Common myeloid progenitor, CD34-positive (primary cell): ENCODE measurements at regions of chr10 and their contacts with region 1.

Region 1: DNA sequence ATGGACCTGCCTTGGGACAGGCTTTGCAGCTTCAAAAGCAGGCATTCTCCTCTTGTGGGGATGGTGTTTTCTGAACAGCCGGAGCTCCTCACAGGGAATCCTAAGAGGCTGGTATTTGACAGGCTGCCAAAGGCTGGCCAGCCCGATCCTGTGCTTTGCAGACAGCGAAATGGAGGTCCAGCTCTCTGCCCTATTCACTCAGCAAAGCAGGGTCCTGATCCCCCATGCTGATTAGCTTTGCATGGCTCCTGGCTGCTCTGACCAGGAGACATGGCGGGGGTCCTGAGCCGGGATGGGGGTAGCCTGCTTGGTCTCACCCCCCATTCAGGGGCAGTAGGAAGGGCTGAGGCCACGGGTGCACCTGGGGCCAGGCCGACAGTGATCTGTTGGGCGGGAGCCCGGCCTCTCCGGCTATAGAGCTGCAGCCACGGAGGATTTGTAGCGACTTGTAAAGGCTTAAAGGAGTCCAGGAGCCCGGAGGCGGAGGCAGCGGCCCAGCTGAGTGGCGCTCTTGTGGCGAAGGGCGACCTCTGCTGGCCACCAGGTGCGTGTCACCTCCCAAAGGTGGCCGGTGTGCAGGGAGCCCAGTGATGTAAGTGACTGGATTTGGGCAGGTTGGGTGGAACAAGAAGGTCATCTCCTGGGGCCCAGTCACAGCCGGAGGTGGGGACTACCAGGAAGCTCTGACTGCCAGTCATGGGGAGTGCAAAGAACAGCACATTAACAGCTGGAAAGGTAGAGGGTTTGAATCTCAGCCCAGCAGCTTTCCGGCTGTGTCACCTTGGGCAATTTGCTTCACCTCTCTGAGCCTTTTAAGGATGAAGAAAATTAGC is 126.5 kb downstream of the ZMIZ1 start:
- DNase-seq: peak; percentile 86 to 93 (median 92)
- H3K4me3 ChIP-seq: peak overlapping the region in 3 of 7 experiments; percentile 4 to 37 (median 34)
- H3K27ac ChIP-seq: peak overlapping the region in 1 of 2 experiments; percentile 50
- H3K4me1 ChIP-seq: peaks cover 0 to 51% (median 43%) of the 10 kb centered on the region in 4 experiments
- H3K27me3 ChIP-seq: no peaks in the 10 kb centered on the region

Region 2: GRCh38 chr10:78047314-78047891 is 1147.9 kb before region 1 on chr10:
- CTCF ChIA-PET with region 1: interaction called, 17 read pairs
- POLR2A ChIA-PET with region 1: no interaction called
- DNase-seq: peak; percentile 82 to 91 (median 84)
- H3K4me3 ChIP-seq: no peak overlapping the region
- H3K27ac ChIP-seq: no peak overlapping the region
- H3K4me1 ChIP-seq: peaks cover 0 to 7% (median 2%) of the 10 kb centered on the region in 4 experiments
- H3K27me3 ChIP-seq: no peaks in the 10 kb centered on the region

Region 3: DNA sequence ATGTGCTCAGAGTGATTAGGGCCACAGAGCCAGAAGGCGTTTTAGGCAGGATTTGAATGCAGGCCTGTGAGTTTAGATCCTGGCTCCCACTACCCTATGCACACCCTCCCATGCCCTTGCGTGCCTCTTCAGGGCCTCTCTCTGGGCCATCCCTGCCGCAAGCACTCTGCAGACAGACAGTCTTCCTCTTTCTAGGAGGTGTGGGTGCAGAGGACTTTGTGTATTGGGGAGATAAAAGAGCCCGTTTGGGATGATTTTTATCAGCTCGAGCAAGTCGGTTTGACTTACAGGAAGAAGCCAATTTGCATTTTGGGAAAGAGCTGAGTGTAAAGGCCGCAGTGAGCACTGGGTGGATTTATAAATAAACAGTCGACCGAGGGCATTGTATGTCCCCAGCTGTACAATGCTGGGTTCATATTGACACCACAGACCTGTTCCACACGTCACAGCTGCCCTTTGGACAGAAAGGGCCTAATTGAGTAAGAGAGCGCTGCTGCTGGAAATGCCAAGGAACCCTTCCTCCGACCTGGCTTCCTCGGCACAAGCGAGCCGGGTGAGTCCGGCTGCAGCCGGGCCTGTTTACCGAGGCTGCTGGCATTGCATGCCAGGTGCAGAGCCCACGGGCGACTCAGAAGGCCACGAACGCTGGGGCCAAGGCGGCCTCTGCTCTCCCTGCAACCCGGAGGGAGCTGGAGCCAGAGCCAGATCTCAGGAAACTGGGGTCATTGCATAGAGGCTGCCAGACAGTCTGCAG is 101.5 kb before region 1 on chr10:
- CTCF ChIA-PET with region 1: interaction called, 11 read pairs
- POLR2A ChIA-PET with region 1: interaction called, 4 read pairs
- DNase-seq: peak; percentile 88 to 94 (median 91)
- H3K4me3 ChIP-seq: peak overlapping the region in 6 of 7 experiments; percentile 13 to 61 (median 46)
- H3K27ac ChIP-seq: peak overlapping the region; percentile 88 to 90
- H3K4me1 ChIP-seq: peaks cover 14 to 100% (median 97%) of the 10 kb centered on the region in 4 experiments
- H3K27me3 ChIP-seq: no peaks in the 10 kb centered on the region

Region 4: DNA sequence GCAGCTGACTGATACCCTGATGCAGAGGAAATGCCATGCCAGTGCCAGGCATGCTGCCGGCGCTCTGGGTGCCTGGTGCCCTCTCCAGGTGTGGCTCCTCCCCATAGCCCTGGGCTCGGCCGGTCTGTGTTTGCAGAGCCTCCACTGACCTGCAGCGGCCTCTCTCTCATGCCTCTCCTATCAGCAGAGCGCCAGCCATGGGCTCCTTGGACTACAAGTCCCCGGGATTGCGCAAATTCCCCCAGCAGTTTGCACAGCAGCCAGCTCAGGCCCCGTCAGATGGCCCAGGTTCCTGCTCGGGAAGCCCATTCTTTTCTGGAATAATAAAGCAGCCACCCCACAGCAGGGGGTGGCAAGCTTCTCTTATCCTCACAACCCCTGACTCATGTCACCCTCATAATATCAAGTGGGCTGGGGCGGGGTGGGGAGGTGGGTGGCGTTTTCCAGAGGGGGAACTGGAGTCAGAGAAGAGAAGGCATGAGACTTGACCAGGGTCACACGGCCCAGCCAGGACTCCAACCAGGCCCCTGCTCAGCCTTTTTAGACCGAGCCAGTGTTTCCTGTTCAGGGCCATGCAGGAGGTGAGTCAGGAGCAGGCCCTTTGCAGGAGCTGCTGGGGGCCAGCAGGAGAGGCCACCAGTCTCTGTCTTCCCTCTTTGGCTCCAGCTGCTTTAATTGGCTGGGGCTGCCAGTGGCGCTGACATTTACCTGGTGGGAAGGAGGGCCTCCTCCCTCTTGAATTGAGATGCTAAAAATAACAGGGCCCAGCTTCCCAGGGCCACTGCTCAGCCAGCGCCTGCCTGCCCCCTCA is 68.0 kb before region 1 on chr10:
- CTCF ChIA-PET with region 1: interaction called, 114 read pairs
- POLR2A ChIA-PET with region 1: interaction called, 3 read pairs
- DNase-seq: peak in 1 of 3 donors; percentile 40
- H3K4me3 ChIP-seq: no peak overlapping the region
- H3K27ac ChIP-seq: peak overlapping the region in 1 of 2 experiments; percentile 46
- H3K4me1 ChIP-seq: peaks cover 13 to 95% (median 78%) of the 10 kb centered on the region in 4 experiments
- H3K27me3 ChIP-seq: no peaks in the 10 kb centered on the region

Region 5: GRCh38 chr10:79149662-79150443 is 45.5 kb before region 1 on chr10:
- CTCF ChIA-PET with region 1: interaction called, 190 read pairs
- POLR2A ChIA-PET with region 1: interaction called, 4 read pairs
- DNase-seq: peak in 1 of 3 donors; percentile 42
- H3K4me3 ChIP-seq: peak overlapping the region in 1 of 7 experiments; percentile 6
- H3K27ac ChIP-seq: peak overlapping the region; percentile 64 to 80
- H3K4me1 ChIP-seq: peaks cover 10 to 91% (median 78%) of the 10 kb centered on the region in 4 experiments
- H3K27me3 ChIP-seq: no peaks in the 10 kb centered on the region

Region 6: GRCh38 chr10:79178614-79179163 is 16.6 kb before region 1 on chr10:
- CTCF ChIA-PET with region 1: interaction called, 195 read pairs
- POLR2A ChIA-PET with region 1: interaction called, 6 read pairs
- DNase-seq: peak; percentile 95 to 99 (median 99)
- H3K4me3 ChIP-seq: peak overlapping the region in 3 of 7 experiments; percentile 16 to 61 (median 47)
- H3K27ac ChIP-seq: peak overlapping the region; percentile 73 to 91
- H3K4me1 ChIP-seq: peaks cover 4 to 100% (median 98%) of the 10 kb centered on the region in 4 experiments
- H3K27me3 ChIP-seq: no peaks in the 10 kb centered on the region